Activated T-helper 2 cell treated with anti-CD3 and anti-CD28 coated beads, Interferon-gamma antibody, Interleukin-2, Interleukin-4, amounts not matched to agents 10 μg/mL and 5 μg/mL and 100 μg/mL, durations not matched to agents 14 hours and 24 hours and 36 hours (primary cell): ENCODE measurements at regions of chrX and their contacts with region 1.

Region 1: DNA sequence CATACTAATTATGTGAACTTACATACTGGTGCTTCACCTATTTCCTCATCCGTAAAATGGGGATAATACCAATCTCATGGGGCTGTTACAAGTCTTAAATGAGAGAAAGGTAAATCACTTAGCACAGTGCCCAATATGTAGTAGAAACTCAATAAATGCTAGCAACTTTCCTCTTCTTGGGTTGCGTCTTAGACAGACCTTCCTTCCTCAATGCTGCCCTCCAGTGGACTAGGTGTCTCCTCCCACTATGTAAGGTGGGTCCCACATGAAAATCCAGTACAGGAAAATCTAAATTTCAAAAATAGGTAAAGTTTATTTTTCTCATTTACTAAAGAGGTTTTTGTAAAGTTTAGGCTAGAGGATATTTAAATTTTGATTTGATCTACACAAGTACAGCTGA is 20.6 kb downstream of the ZDHHC9 start:
- DNase-seq: no peak
- H3K4me3 Mint-ChIP-seq: no peak overlapping the region
- H3K27ac Mint-ChIP-seq: peak overlapping the region; percentile 81
- H3K4me1 Mint-ChIP-seq: peaks cover 14% of the 10 kb centered on the region
- H3K27me3 Mint-ChIP-seq: no peaks in the 10 kb centered on the region

Region 2: DNA sequence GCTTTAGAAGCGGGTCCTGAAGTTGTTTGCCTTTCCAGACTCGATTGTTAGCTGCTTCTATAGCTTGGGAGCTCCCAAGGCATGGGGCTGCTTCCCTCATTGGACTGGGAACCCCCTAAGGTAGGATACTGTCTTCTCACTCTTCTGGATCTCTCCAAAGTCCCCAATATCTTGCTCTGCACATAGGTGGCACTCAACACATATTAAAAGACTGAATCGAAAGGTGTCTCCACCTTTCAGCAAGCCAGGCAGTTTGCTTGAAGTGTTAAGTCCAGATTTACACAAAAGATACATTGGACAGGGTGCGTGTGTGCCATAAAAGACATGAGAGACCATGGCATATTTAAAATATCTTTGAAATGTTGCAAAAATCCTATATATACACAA is 167.3 kb before region 1 on chrX:
- intact Hi-C with region 1: loop called (anchors 1 kb)
- DNase-seq: no peak
- H3K4me3 Mint-ChIP-seq: peak overlapping the region; percentile 67
- H3K27ac Mint-ChIP-seq: no peak overlapping the region
- H3K4me1 Mint-ChIP-seq: peaks cover 3% of the 10 kb centered on the region
- H3K27me3 Mint-ChIP-seq: peaks cover 25% of the 10 kb centered on the region